ENCODE measurements at regions of chr1 and their contacts with region 1.

Region 1: DNA sequence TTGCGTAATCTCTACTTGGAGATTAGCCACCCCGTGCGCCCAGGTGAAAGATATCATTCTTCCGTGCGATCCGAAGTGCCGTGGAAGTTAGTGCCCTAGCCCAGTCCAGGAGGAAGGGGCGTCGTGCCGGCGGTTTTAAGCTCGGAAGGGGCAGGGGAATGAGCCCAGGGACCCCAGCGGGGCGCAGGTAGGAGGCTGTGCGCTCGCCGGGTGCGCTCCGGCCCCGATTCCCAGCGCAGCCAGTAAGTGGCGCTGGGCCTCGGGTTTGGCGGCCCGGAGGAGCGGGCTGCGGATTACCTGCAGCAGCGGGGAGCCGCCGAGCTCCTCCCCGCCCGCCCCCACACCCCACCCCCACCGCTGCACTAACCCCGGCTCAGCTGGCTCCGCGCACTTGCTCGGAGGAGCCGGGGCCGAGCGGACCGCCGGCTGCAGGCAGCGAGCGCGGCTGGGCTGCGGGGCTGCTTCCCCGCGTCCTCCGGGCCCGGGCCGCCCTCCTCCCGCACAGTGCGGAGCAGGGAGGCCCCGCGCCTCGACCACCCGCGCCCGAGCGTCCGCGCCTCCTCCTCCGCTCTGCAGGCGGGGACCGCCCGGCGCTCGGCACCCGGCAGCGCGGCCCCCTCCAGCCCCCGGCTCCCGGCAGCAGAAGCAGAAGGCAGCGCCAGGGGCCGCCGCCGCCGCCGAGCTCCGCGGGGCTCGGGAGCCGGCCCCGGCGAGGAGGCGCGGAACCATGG is at the start of gene RYR2:
- DNase-seq: no peak
- ATAC-seq: no peak
- H3K4me3 ChIP-seq: no peak within 1 kb of the TSS
- H3K27ac ChIP-seq: no peak within 1 kb of the TSS
- H3K4me1 ChIP-seq: no peaks in the 10 kb centered on the region
- H3K27me3 ChIP-seq: peaks cover 13% of the 10 kb centered on the region
- CTCF ChIP-seq: no peak
- total RNA-seq, gene RYR2: not detected in 2 replicates

Region 2: DNA sequence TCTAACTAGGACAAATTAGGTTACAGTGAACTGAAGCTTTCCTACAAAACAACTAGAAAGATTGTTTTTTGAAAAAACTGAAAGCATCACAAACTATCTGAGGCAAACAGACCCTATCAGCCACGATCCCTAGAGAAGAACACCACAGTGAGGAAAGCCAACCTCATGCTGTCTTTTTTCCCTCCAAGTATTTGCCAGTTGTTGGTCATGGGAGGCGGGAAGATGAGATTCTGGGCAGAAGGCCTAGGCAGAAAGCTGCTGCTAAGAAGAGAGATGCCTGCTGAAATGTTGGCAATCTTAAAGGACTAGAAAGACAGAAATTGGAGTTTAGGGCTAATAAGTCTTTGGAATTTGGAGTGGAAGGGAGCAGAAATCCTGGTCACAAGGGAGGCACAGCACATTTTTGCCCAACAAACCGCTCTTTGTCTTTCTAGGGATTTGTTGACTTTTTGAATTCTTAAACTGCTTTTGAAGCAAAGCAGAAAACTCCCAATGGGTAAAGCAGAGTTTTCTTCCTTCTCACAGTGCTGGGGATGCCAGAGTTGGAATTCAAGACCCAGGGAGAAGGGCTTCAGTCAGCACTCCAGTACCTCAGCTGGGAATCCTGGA is 121.6 kb before region 1 on chr1:
- CTCF ChIA-PET with region 1: no interaction called
- POLR2A ChIA-PET with region 1: interaction called, 11 read pairs
- intact Hi-C with region 1: no loop called
- DNase-seq: no peak
- ATAC-seq: no peak
- H3K4me3 ChIP-seq: no peak overlapping the region
- H3K27ac ChIP-seq: no peak overlapping the region
- H3K4me1 ChIP-seq: no peaks in the 10 kb centered on the region
- H3K27me3 ChIP-seq: peaks cover 6% of the 10 kb centered on the region; the same call in 1 of the 2 replicates
- CTCF ChIP-seq: no peak